Sigmoid colon (tissue), 7 donors: ENCODE measurements at regions of chr3 and their contacts with region 1.

Region 1: GRCh38 chr3:11155341-11156025 is 1.2 kb downstream of the HRH1 start:
- DNase-seq: peak; percentile 92
- H3K4me3 ChIP-seq: peak overlapping the region; percentile 38 to 73 (median 62)
- H3K27ac ChIP-seq: peak overlapping the region; percentile 64 to 79 (median 74)
- H3K4me1 ChIP-seq: peaks cover 0 to 55% (median 36%) of the 10 kb centered on the region in 4 donors
- H3K27me3 ChIP-seq: no peaks in the 10 kb centered on the region
- CTCF ChIP-seq: peak; percentile 76 to 84 (median 81)
- EP300 ChIP-seq: no peak
- POLR2A ChIP-seq: no peak

Region 2: DNA sequence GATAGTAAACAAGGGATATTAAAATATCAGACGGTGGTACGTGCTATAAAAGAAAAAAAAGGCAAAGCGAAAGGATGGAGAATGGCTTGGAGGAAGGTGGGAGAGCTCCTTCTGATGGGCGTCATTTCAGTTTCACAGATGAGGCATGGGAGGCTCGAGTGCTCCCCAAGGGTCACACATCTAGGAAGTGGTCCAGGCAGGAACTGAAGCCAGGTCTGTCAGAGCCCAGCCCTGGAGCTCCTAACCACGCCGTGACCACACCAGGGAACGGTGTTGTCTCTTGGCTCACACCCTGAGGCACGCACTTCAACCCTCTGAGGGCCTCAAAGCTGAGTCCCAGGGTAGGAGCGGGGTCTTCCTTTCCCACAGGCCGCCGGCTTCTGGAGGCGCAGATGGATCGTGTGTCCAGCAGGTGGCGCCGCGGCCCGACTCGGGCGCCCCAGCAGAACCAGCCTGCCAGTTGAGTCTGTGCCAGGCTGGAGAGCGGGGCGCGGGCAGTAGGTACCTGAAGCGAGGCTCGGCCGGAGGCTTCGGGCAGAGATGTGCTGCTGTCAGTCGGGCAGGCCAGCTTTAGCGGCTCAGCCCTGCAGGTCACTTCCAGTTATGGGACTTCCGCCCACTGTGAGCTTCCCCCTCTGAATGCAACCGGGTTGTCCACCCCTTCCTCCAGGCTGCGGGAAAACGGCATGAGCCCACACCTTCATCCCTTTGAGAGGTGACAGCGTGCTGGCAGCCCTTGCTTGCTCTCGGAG is 94.8 kb before region 1 on chr3:
- intact Hi-C with region 1: loop called (anchors 5 kb)
- DNase-seq: peak; percentile 84
- H3K4me3 ChIP-seq: peak overlapping the region in 3 of 4 donors; percentile 16 to 35 (median 33)
- H3K27ac ChIP-seq: peak overlapping the region in 1 of 4 donors; percentile 12
- H3K4me1 ChIP-seq: peaks cover 0 to 21% (median 15%) of the 10 kb centered on the region in 4 donors
- H3K27me3 ChIP-seq: peaks cover 0 to 13% (median 6%) of the 10 kb centered on the region in 3 donors
- CTCF ChIP-seq: peak; percentile 82 to 93 (median 92)
- EP300 ChIP-seq: no peak
- POLR2A ChIP-seq: no peak

Region 3: DNA sequence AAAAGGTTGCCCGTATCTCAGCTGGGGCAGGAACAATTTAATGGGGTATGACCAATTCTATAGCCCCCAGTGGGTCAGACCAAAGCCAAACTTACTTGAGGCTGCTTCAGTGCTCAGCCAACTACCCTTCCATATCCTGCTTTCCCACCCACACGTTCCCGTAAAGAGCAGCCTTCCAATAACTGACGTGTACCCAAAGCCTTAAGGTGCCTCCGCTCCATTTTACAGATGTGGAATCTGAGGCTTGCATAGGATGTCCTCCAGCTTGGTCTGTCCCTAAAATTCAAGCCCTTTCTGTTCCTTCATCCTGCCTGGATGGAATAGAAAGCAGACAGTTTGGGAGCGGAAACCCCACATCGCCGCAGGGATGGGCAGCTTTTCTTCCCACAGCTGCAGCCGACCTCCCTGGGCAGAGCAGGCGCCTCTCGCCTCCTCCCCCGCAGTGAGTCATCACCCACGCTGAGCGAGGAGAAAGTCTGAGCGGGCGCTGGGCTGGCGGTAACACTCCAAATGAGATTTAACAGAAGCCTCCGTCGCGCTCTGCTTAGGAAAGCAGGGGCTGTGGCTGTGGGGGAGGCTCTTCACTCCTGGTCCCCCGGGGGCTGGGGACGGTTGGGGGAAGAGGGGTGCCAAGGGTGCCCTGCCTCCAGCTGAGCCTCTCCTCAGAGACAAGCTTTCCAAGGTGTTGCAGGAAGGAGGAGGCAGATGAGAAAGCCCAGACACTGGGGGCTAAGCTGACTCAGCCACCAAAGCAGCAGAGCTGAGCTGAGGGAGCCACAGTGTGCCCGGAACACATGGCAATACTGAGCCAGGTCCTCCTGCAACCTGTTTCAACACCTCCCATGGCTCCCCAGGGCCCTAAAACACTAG is 59.0 kb before region 1 on chr3:
- intact Hi-C with region 1: loop called (anchors 5 kb)
- DNase-seq: peak; percentile 91
- H3K4me3 ChIP-seq: peak overlapping the region in 3 of 4 donors; percentile 30 to 43 (median 37)
- H3K27ac ChIP-seq: peak overlapping the region; percentile 83 to 91 (median 87)
- H3K4me1 ChIP-seq: peaks cover 0 to 54% (median 37%) of the 10 kb centered on the region in 4 donors
- H3K27me3 ChIP-seq: no peaks in the 10 kb centered on the region
- CTCF ChIP-seq: no peak
- EP300 ChIP-seq: peak in 2 of 4 donors; percentile 42 to 59
- POLR2A ChIP-seq: no peak

Region 4: GRCh38 chr3:11211531-11212298 is 56.2 kb after region 1 on chr3:
- intact Hi-C with region 1: loop called (anchors 5 kb)
- DNase-seq: peak; percentile 55
- H3K4me3 ChIP-seq: no peak overlapping the region
- H3K27ac ChIP-seq: peak overlapping the region in 3 of 4 donors; percentile 75 to 91 (median 80)
- H3K4me1 ChIP-seq: peaks cover 0 to 62% (median 45%) of the 10 kb centered on the region in 4 donors
- H3K27me3 ChIP-seq: no peaks in the 10 kb centered on the region
- CTCF ChIP-seq: peak in 1 of 4 experiments; percentile 16
- EP300 ChIP-seq: no peak
- POLR2A ChIP-seq: no peak

Region 5: DNA sequence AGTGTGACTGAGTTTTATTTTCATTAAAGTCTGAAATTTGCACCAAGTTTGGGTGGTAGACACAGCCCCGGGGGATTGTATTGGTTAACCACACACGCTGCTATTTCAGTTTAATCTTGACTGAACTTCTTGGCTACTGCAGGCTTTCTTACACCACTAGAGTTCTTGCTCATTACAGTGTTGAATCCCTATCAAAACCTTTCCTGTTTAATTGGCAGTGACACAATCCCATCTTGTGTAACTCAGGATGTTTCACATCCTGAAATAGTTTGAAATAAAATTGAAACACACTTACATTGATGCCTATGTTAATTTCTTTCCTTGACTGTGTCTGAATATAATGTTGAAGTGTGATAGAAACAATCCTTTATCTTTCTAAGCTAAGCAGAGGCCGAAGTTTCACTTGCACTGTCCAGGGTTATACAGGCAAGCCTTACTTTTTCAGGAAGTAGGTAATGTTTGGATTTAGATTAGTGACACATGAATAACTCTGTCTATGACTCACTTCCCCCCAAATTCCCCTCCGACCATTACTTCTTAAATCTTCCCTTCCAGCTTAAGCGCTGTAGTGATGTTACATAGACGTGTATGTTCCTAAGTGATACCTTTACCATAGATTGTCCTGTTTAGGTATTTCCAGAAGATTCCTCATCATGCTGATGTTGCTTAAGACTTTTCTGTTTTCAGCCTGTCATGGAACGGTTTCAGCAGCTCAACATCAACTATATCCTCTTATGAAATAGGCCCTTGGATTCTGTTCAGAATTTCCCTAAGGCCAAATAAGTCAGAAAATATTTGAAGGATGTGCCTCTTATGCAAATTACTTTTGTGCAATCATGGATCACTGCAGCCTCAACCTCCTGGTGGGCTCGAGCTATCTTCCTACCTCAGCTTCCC is 133.6 kb after region 1 on chr3:
- intact Hi-C with region 1: loop called (anchors 5 kb)
- DNase-seq: no peak
- H3K4me3 ChIP-seq: no peak overlapping the region
- H3K27ac ChIP-seq: peak overlapping the region; percentile 71 to 83 (median 76)
- H3K4me1 ChIP-seq: peaks cover 0 to 39% (median 38%) of the 10 kb centered on the region in 4 donors
- H3K27me3 ChIP-seq: no peaks in the 10 kb centered on the region
- CTCF ChIP-seq: no peak
- EP300 ChIP-seq: no peak
- POLR2A ChIP-seq: no peak

Region 6: DNA sequence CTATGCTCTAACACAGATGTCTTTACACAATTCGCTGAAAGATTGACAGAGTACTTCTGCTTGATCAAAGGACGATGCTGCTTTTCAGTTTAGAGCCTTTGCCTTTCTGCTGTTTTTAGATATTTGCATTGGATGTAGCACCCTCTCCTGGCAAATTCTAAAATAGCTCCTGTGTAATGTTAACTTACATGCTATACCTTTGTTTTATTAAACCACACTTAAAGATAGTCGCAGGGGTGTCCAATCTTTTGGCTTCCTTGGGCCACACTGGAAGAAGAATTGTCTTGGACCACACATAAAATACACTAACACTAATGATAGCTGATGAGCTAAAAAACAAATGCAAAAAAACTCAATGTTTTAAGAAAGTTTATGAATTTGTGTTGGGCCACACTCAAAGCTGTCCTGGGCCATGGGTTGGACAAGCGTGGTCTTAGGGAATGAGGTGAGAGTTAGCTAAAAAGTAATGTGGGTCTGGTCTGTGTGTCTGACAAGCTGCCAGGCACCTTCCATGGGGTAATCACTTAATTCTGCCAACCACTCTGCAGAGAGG is 179.6 kb after region 1 on chr3:
- intact Hi-C with region 1: loop called (anchors 5 kb)
- DNase-seq: no peak
- H3K4me3 ChIP-seq: no peak overlapping the region
- H3K27ac ChIP-seq: no peak overlapping the region
- H3K4me1 ChIP-seq: no peaks in the 10 kb centered on the region
- H3K27me3 ChIP-seq: no peaks in the 10 kb centered on the region
- CTCF ChIP-seq: peak; percentile 45 to 71 (median 68)
- EP300 ChIP-seq: no peak
- POLR2A ChIP-seq: no peak